A549 (cell line): ENCODE measurements at regions of chr7 and their contacts with region 1.

Region 1: GRCh38 chr7:134432296-134433152 is 26.4 kb downstream of the AKR1B1 start:
- DNase-seq: peak; percentile 99 to 100
- ATAC-seq: peak; percentile 92 to 96
- H3K4me3 ChIP-seq: peak overlapping the region; percentile 46
- H3K27ac ChIP-seq: peak overlapping the region; percentile 79 to 88
- H3K4me1 ChIP-seq: peaks cover 30% of the 10 kb centered on the region
- CTCF ChIP-seq: peak; percentile 100
- EP300 ChIP-seq: no peak
- POLR2A ChIP-seq: no peak; the same call in 1 of the 2 replicates
- RAD21 ChIP-seq: peak; percentile 100

Region 2: DNA sequence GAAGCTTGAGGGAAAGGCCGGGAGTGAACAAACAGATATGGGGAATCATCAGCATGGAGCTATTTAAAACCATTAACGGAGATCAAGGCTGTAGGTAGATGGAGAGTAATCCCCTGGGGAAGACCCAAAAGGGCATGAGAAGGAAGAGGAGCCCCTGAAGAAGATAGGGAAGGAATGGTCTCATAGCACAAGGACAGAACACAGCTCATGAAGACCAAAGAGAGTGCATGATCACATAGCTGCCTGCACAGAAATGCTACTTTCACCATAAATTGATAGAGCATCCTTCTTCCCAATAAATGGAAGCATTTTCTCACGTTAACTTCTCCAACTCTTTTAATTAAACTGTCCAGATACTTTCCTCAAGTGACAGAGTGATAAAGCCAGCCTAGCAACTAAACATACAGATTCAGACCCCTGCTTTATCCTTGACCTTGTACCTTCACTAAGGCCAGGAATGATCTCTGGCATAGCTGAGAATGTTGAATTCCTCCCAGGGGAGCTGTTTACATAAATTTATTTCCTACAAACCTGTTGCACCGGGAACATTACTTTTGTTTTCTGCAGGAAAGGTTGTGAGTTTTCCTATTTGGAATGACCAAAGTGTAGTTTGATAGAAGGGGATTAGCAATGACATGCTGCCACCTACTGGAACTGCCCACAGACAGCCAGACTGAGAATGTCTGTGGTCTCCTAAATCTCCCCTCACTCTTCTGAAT is 416.1 kb before region 1 on chr7:
- CTCF ChIA-PET with region 1: interaction called, 21 read pairs
- POLR2A ChIA-PET with region 1: interaction called, 3 read pairs
- DNase-seq: peak; percentile 57 to 65
- ATAC-seq: peak; percentile 88 to 96
- H3K4me3 ChIP-seq: no peak overlapping the region
- H3K27ac ChIP-seq: no peak overlapping the region
- H3K4me1 ChIP-seq: peaks cover 7% of the 10 kb centered on the region; the same call in 1 of the 3 replicates
- CTCF ChIP-seq: peak; percentile 98
- EP300 ChIP-seq: no peak
- POLR2A ChIP-seq: no peak
- RAD21 ChIP-seq: peak; percentile 95 to 96

Region 3: DNA sequence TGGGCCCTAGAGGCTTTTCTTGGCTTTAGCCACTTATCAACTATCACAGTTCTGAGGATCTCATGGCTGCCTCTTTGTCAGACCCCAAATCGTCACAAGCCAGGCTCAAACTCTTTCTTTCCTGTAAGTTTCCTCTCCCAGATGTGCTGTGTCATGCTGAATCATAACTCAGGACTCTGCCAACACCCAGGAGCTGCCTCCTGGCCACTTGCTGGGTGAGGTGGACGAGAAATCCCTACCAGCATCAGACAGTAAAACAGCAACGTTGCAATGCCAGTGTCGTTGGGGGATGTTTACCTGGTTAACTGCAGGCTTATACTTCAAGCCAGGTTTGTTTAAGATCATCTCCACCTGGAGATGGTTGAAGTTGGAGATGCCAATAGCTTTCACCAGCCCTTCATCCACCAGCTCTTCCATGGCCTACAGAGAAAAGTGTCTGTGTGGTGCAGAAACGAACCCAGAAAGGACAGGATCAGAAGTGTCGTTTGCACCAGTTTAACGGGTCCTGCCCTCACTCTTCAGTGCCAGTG is 16.2 kb after region 1 on chr7:
- CTCF ChIA-PET with region 1: interaction called, 258 read pairs
- POLR2A ChIA-PET with region 1: interaction called, 5 read pairs
- DNase-seq: peak; percentile 94 to 97
- ATAC-seq: peak; percentile 58 to 71
- H3K4me3 ChIP-seq: no peak overlapping the region
- H3K27ac ChIP-seq: peak overlapping the region; percentile 94 to 95
- H3K4me1 ChIP-seq: peaks cover 97% of the 10 kb centered on the region
- CTCF ChIP-seq: no peak
- EP300 ChIP-seq: peak in 1 of 2 experiments; percentile 42; a peak in 1 of 5 replicates
- POLR2A ChIP-seq: no peak
- RAD21 ChIP-seq: no peak; a peak in 1 of 5 replicates

Region 4: GRCh38 chr7:134502463-134503371 is 70.2 kb after region 1 on chr7:
- CTCF ChIA-PET with region 1: interaction called, 99 read pairs
- POLR2A ChIA-PET with region 1: interaction called, 5 read pairs
- DNase-seq: no peak
- ATAC-seq: no peak
- H3K4me3 ChIP-seq: no peak overlapping the region
- H3K27ac ChIP-seq: peak overlapping the region in 1 of 2 experiments; percentile 55; a peak in 3 of 6 replicates
- H3K4me1 ChIP-seq: 0 out of 3 replicates have a peak, but pooled peaks cover 9% of the 10 kb centered on the region
- CTCF ChIP-seq: no peak
- EP300 ChIP-seq: no peak
- POLR2A ChIP-seq: no peak
- RAD21 ChIP-seq: no peak

Region 5: DNA sequence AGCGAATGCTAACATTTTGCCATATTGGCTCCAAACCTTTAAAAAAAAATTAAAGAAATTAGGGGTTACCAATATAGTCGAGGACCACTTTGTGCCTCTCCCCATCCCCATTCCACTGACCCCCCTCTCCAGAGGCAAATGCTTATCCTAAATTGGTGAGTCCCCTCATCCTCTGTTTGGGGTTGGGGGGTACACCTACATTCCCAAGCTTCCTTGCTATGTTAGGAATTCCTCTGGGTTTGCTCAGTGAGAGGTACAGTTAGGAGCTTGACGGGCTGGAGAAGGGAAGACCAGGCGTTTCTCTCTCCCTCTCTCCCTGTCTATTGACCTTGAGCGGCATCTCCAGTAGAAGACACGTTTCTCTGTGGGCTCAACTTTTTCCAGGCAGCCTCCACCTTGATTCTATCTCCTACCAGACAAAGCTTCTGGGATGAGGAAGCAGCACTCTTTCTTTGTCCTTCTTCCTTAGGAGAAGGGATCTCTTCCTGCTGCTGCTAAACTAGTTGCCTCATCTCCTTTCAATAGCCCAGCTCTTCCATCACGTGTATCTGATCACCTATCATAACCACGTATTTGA is 109.8 kb after region 1 on chr7:
- CTCF ChIA-PET with region 1: interaction called, 54 read pairs
- POLR2A ChIA-PET with region 1: interaction called, 7 read pairs
- DNase-seq: peak in 1 of 2 experiments; percentile 76
- ATAC-seq: peak; percentile 24 to 25
- H3K4me3 ChIP-seq: no peak overlapping the region
- H3K27ac ChIP-seq: peak overlapping the region; percentile 18 to 66; a peak in 5 of 6 replicates
- H3K4me1 ChIP-seq: peaks cover 86% of the 10 kb centered on the region
- CTCF ChIP-seq: no peak
- EP300 ChIP-seq: no peak
- POLR2A ChIP-seq: no peak
- RAD21 ChIP-seq: no peak

Region 6: DNA sequence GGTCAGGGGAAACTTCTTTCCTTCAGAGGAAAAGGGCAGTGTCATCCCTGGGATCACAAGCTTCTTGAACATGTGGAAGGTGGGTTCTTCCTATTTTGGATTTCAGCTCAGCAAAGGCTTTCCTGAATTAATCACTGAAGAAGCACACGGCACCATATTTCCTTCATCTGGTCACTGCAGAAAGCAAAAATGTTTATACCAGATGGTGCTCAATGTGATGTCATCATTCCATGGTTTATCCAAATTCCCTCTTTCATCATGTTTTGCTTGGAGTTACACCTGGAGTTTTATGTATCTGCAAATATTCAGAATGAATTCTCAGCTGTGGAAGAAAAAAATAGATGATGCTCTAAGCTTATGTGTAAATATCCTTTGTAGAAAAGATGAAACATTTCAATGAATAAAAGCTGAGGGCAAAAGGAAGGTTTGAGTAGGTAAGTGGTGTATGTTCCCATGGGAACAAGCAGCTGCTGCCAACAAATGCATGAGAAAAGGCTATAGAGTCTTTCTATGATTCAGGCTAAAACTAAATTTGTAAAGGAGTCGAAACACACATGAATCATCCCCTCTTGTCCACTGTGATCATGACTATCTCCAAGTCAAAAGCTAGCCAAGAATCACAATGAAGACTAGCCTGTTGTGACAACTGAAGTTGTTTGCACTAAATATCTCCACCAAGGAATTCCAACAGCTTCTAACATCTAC is 187.3 kb after region 1 on chr7:
- CTCF ChIA-PET with region 1: interaction called, 11 read pairs
- POLR2A ChIA-PET with region 1: interaction called, 3 read pairs
- DNase-seq: peak in 1 of 2 experiments; percentile 66
- ATAC-seq: peak; percentile 83 to 86
- H3K4me3 ChIP-seq: no peak overlapping the region
- H3K27ac ChIP-seq: peak overlapping the region; percentile 44 to 54; a peak in 5 of 6 replicates
- H3K4me1 ChIP-seq: peaks cover 25% of the 10 kb centered on the region
- CTCF ChIP-seq: no peak
- EP300 ChIP-seq: no peak
- POLR2A ChIP-seq: no peak
- RAD21 ChIP-seq: no peak